ENCODE measurements at regions of chr11 and their contacts with region 1.

Region 1: GRCh38 chr11:18634140-18635032 is at the start of gene SPTY2D1:
- DNase-seq: peak; percentile 93
- ATAC-seq: peak; percentile 96
- H3K4me3 ChIP-seq: peak within 1 kb of the TSS; percentile 99
- H3K27ac ChIP-seq: peak within 1 kb of the TSS; percentile 89
- H3K4me1 ChIP-seq: peaks cover 7% of the 10 kb centered on the region
- H3K27me3 ChIP-seq: no peaks in the 10 kb centered on the region
- CTCF ChIP-seq: no peak
- EP300 ChIP-seq: no peak; a peak in 1 of 4 replicates
- POLR2A ChIP-seq: peak; percentile 97
- RAD21 ChIP-seq: no peak
- polyA plus RNA-seq, gene SPTY2D1: 4.6 to 4.7 TPM

Region 2: GRCh38 chr11:18171377-18172000 is 462.9 kb before region 1 on chr11:
- CTCF ChIA-PET with region 1: no interaction called
- POLR2A ChIA-PET with region 1: no interaction called
- RAD21 ChIA-PET with region 1: no interaction called
- SMC1A ChIA-PET with region 1: no interaction called
- in situ Hi-C with region 1: no loop called
- intact Hi-C with region 1: no loop called
- DNase-seq: no peak
- ATAC-seq: peak; percentile 79
- H3K4me3 ChIP-seq: no peak overlapping the region
- H3K27ac ChIP-seq: no peak overlapping the region
- H3K4me1 ChIP-seq: no peaks in the 10 kb centered on the region
- H3K27me3 ChIP-seq: no peaks in the 10 kb centered on the region; a peak in 1 of 4 replicates
- CTCF ChIP-seq: peak; percentile 59 to 76 (median 61)
- EP300 ChIP-seq: no peak
- POLR2A ChIP-seq: no peak
- RAD21 ChIP-seq: peak; percentile 71

Region 3: GRCh38 chr11:18395735-18396504 is 238.5 kb before region 1 on chr11:
- CTCF ChIA-PET with region 1: interaction called, 3 read pairs
- POLR2A ChIA-PET with region 1: no interaction called
- RAD21 ChIA-PET with region 1: interaction called, 10 read pairs
- SMC1A ChIA-PET with region 1: interaction called, 3 read pairs
- in situ Hi-C with region 1: no loop called
- intact Hi-C with region 1: loop called (anchors 5 kb)
- DNase-seq: peak; percentile 86
- ATAC-seq: peak; percentile 85
- H3K4me3 ChIP-seq: peak overlapping the region; percentile 97
- H3K27ac ChIP-seq: peak overlapping the region; percentile 95
- H3K4me1 ChIP-seq: peaks cover 15% of the 10 kb centered on the region
- H3K27me3 ChIP-seq: no peaks in the 10 kb centered on the region
- CTCF ChIP-seq: no peak
- EP300 ChIP-seq: no peak
- POLR2A ChIP-seq: peak; percentile 83
- RAD21 ChIP-seq: no peak

Region 4: DNA sequence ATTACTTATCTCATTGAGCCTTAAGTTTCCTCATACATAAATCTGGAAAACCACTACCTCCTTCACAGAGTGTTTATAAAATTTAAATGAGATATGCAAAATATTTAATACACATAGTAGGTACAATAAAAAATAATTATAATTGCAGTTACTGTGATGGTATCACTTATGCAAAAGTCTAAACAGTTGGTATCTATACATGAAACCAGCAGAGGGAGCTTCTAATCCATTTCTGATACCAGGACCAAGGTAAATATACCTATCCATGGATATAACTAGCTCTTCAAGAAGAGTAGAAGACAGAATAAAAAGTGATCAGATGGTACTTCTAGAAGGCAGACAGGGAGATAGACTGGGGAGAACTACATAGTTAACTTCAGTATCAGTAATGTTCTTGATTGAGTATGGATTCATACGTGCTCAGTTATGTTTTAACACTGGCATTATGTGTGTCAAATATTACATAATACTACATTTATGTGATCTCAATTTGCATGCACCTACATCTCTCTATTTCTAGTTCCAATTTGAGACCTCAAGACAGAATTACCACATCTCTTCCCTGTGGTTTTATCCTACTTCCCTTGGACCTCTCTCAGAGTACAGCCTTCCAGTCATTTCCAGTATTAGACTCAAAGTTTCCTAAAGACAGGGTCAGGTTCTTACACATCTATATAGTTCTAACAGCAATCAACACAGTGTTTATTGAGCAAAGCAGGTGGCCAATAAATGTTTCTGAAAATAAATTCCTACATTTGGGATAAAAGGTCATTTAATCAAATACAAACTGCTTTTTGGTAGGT is 94.0 kb before region 1 on chr11:
- CTCF ChIA-PET with region 1: interaction called, 27 read pairs
- POLR2A ChIA-PET with region 1: no interaction called
- RAD21 ChIA-PET with region 1: interaction called, 15 read pairs
- SMC1A ChIA-PET with region 1: interaction called, 17 read pairs
- in situ Hi-C with region 1: no loop called
- intact Hi-C with region 1: no loop called
- DNase-seq: no peak
- ATAC-seq: peak; percentile 84
- H3K4me3 ChIP-seq: no peak overlapping the region
- H3K27ac ChIP-seq: no peak overlapping the region
- H3K4me1 ChIP-seq: no peaks in the 10 kb centered on the region
- H3K27me3 ChIP-seq: no peaks in the 10 kb centered on the region
- CTCF ChIP-seq: peak; percentile 46 to 69 (median 56)
- EP300 ChIP-seq: no peak
- POLR2A ChIP-seq: no peak
- RAD21 ChIP-seq: peak; percentile 66

Region 5: GRCh38 chr11:18588297-18589252 is 45.8 kb before region 1 on chr11 and contains the start of gene UEVLD:
- CTCF ChIA-PET with region 1: interaction called, 9 read pairs
- POLR2A ChIA-PET with region 1: interaction called, 12 read pairs
- RAD21 ChIA-PET with region 1: interaction called, 25 read pairs
- SMC1A ChIA-PET with region 1: interaction called, 64 read pairs
- in situ Hi-C with region 1: no loop called
- intact Hi-C with region 1: loop called (anchors 5 kb)
- DNase-seq: peak; percentile 31
- ATAC-seq: peak; percentile 77
- H3K4me3 ChIP-seq: peak within 1 kb of the TSS; percentile 80
- H3K27ac ChIP-seq: peak within 1 kb of the TSS; percentile 67
- H3K4me1 ChIP-seq: peaks cover 7% of the 10 kb centered on the region
- H3K27me3 ChIP-seq: no peaks in the 10 kb centered on the region
- CTCF ChIP-seq: no peak
- EP300 ChIP-seq: no peak
- POLR2A ChIP-seq: peak; percentile 85
- RAD21 ChIP-seq: no peak
- polyA plus RNA-seq, gene UEVLD: 6.5 to 9.6 TPM

Region 6: GRCh38 chr11:18650859-18651557 is 16.6 kb after region 1 on chr11:
- CTCF ChIA-PET with region 1: interaction called, 10 read pairs
- POLR2A ChIA-PET with region 1: no interaction called
- RAD21 ChIA-PET with region 1: no interaction called
- SMC1A ChIA-PET with region 1: interaction called, 9 read pairs
- in situ Hi-C with region 1: no loop called
- intact Hi-C with region 1: no loop called
- DNase-seq: peak; percentile 20
- ATAC-seq: peak; percentile 94
- H3K4me3 ChIP-seq: no peak overlapping the region; the same call in 1 of the 2 replicates
- H3K27ac ChIP-seq: no peak overlapping the region
- H3K4me1 ChIP-seq: no peaks in the 10 kb centered on the region
- H3K27me3 ChIP-seq: no peaks in the 10 kb centered on the region
- CTCF ChIP-seq: peak; percentile 73 to 86 (median 75)
- EP300 ChIP-seq: no peak
- POLR2A ChIP-seq: peak; percentile 57; the same call in 1 of the 2 replicates
- RAD21 ChIP-seq: peak; percentile 87

Region 7: GRCh38 chr11:18754308-18754707 is 119.9 kb after region 1 on chr11:
- CTCF ChIA-PET with region 1: no interaction called
- POLR2A ChIA-PET with region 1: no interaction called
- RAD21 ChIA-PET with region 1: no interaction called
- SMC1A ChIA-PET with region 1: no interaction called
- in situ Hi-C with region 1: no loop called
- intact Hi-C with region 1: no loop called
- DNase-seq: no peak
- ATAC-seq: peak; percentile 31; the same call in 2 of the 3 replicates
- H3K4me3 ChIP-seq: no peak overlapping the region
- H3K27ac ChIP-seq: no peak overlapping the region
- H3K4me1 ChIP-seq: no peaks in the 10 kb centered on the region
- H3K27me3 ChIP-seq: no peaks in the 10 kb centered on the region; a peak in 2 of 4 replicates
- CTCF ChIP-seq: no peak
- EP300 ChIP-seq: no peak
- POLR2A ChIP-seq: no peak
- RAD21 ChIP-seq: no peak

Region 8: DNA sequence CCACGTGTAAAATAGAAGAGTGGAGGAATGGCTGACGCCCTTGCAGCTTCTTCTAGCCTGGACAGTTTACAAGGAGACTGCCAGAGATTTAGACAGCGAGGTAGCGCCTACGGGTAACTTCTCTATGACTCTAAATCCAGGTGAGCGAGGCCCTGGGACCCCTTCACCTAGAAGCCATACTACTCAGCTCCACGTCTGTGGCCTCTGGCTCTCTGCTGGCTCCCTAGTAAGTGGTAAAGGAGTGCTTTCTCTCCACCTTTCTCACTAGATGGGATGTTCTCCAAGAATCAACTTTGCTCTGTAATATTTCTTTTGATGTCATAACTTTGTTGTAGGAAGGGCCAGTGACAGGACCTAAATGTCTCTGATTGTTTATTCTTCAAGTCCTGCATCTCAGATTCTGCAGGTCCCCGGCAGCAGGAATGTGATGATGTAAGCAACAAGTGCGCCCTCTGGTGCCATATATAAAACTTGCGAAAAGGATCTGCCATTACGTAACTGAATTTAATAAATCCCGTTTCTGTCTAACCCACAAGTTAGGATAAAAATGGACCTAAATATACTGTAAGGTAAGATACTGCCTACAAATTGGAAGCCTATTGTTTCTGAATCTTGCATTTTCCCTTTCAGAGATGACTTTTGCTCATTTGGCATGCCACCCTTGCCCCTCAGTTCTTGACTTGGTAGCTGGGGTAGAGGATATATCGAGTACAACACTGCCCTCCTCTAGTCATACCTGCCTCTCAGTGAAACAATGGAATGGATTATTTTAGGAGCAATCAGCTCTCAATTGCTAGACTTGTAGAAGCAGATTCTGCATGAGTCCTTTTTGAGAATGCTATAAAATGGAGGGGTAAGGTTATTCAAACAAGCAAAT is 168.2 kb after region 1 on chr11:
- CTCF ChIA-PET with region 1: no interaction called
- POLR2A ChIA-PET with region 1: no interaction called
- RAD21 ChIA-PET with region 1: no interaction called
- SMC1A ChIA-PET with region 1: no interaction called
- in situ Hi-C with region 1: no loop called
- intact Hi-C with region 1: no loop called
- DNase-seq: peak; percentile 12
- ATAC-seq: peak; percentile 80
- H3K4me3 ChIP-seq: no peak overlapping the region
- H3K27ac ChIP-seq: no peak overlapping the region
- H3K4me1 ChIP-seq: no peaks in the 10 kb centered on the region
- H3K27me3 ChIP-seq: peaks cover 0 to 9% of the 10 kb centered on the region in 2 experiments; a peak in 2 of 4 replicates
- CTCF ChIP-seq: peak; percentile 53 to 73 (median 71); a peak in 5 of 6 replicates
- EP300 ChIP-seq: no peak
- POLR2A ChIP-seq: no peak
- RAD21 ChIP-seq: peak; percentile 65

Region 9: DNA sequence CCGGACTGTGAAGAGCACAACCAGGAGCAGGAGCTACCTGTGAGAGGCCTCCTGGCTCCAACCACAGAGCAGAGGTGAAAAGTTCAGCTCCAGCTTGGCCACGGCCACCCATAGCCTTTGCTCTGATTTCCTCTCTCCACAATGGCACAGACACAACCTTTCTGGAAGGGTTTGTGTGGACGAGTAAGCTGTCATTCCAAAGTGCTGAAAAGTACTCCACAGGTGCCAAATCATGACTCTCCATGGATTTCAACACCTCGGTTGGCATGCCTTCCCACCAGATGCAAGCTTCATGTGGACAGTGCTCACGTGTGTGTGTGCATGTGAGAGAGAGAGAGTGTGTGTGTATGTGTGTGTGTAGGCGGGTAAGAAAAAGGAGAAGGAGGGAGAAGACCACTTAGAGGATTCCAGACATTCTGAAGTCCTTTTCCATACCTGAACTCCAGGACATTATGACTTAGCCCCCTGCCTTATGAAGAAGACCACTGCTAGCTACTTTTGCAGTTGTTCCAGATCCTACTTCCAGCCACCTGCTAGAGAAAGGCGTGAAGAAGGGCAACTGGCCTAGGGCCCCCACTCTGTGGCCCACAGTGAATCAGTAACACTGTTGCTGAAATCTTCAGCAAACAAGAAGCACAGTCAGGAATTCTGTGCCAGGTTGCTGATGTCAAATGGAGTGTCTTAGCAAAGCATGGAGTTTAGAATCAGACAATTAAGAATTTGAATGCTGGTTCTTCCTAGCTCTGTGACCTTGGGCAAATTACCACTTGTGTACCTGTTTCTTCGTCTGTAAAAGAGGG is 1064.3 kb after region 1 on chr11:
- CTCF ChIA-PET with region 1: no interaction called
- POLR2A ChIA-PET with region 1: no interaction called
- RAD21 ChIA-PET with region 1: no interaction called
- SMC1A ChIA-PET with region 1: no interaction called
- in situ Hi-C with region 1: no loop called
- intact Hi-C with region 1: no loop called
- DNase-seq: no peak
- ATAC-seq: no peak
- H3K4me3 ChIP-seq: no peak overlapping the region
- H3K27ac ChIP-seq: no peak overlapping the region
- H3K4me1 ChIP-seq: no peaks in the 10 kb centered on the region
- H3K27me3 ChIP-seq: no peaks in the 10 kb centered on the region; a peak in 2 of 4 replicates
- CTCF ChIP-seq: no peak
- EP300 ChIP-seq: no peak
- POLR2A ChIP-seq: no peak
- RAD21 ChIP-seq: no peak

Measured in GM12878 (cell line).